MCF 10A (cell line): ENCODE measurements at regions of chr11 and their contacts with region 1.

Region 1: GRCh38 chr11:128448200-128448886 is 139.0 kb downstream of the ETS1 start:
- DNase-seq: peak; percentile 87
- H3K4me3 Mint-ChIP-seq: peak overlapping the region; percentile 61
- H3K27ac Mint-ChIP-seq: peak overlapping the region; percentile 88
- H3K4me1 Mint-ChIP-seq: peaks cover 22% of the 10 kb centered on the region
- H3K27me3 Mint-ChIP-seq: no peaks in the 10 kb centered on the region
- CTCF ChIP-seq: peak; percentile 10

Region 2: GRCh38 chr11:128172046-128172878 is 276.1 kb before region 1 on chr11:
- CTCF ChIA-PET with region 1: interaction called, 5 read pairs
- POLR2A ChIA-PET with region 1: no interaction called
- intact Hi-C with region 1: loop called (anchors 1 kb)
- DNase-seq: peak; percentile 87
- H3K4me3 Mint-ChIP-seq: no peak overlapping the region
- H3K27ac Mint-ChIP-seq: peak overlapping the region; percentile 88
- H3K4me1 Mint-ChIP-seq: peaks cover 23% of the 10 kb centered on the region
- H3K27me3 Mint-ChIP-seq: no peaks in the 10 kb centered on the region
- CTCF ChIP-seq: peak; percentile 78

Region 3: GRCh38 chr11:128405714-128406662 is 42.4 kb before region 1 on chr11:
- CTCF ChIA-PET with region 1: interaction called, 7 read pairs
- POLR2A ChIA-PET with region 1: interaction called, 9 read pairs
- intact Hi-C with region 1: loop called (anchors 5 kb)
- DNase-seq: no peak
- H3K4me3 Mint-ChIP-seq: no peak overlapping the region
- H3K27ac Mint-ChIP-seq: no peak overlapping the region
- H3K4me1 Mint-ChIP-seq: peaks cover 34% of the 10 kb centered on the region
- H3K27me3 Mint-ChIP-seq: no peaks in the 10 kb centered on the region
- CTCF ChIP-seq: no peak